GM12878 (cell line): ENCODE measurements at regions of chr22 and their contacts with region 1.

Region 1: DNA sequence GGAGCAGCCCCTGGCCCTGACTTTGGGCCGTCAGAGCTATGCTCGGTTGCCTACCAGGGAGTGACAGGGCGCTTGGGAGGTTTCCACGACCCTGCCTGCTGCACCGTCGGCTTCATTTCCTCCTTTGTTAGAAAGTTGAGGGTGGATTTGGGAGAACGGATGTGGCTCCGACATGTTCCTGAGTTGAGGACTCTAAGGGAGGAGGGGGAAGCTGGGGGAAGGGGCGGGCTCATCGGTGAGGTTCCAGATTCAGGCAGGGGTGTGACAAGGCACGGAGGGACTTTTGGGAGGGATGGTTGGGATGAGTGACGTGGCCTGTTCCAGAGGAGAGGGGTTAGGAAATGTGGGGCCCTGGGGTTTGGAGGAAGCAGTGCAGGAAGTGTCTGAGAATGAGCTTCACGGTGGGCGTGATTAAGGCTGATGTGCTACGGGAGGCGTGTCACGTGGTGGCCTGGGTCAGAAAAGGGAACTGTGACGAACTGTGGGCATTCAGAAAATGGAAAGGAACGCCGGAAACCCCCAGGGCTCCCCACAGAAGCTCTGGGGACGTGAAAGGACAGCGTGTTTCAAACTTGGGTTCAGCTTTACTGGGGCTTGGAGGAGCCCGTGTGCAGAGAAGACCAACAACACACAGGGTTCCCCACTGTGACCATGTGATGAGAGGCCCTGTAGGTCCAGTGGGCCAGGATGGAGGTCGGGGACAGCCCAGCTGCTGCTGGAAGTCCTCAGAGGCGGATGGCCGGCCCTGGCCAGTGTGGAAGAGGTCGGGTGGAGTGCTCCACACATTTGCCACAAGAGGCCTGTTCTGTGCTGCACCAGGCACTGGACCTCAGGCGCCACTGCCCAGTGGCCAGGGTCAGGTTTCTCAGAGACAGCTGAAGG is 2.8 kb downstream of the PARVB start:
- DNase-seq: peak; percentile 89
- ATAC-seq: peak; percentile 65
- H3K4me3 ChIP-seq: peak overlapping the region; percentile 78
- H3K27ac ChIP-seq: peak overlapping the region; percentile 100
- H3K4me1 ChIP-seq: peaks cover 25% of the 10 kb centered on the region
- H3K27me3 ChIP-seq: no peaks in the 10 kb centered on the region
- CTCF ChIP-seq: no peak
- EP300 ChIP-seq: peak; percentile 90 to 93
- POLR2A ChIP-seq: peak; percentile 82
- RAD21 ChIP-seq: no peak

Region 2: DNA sequence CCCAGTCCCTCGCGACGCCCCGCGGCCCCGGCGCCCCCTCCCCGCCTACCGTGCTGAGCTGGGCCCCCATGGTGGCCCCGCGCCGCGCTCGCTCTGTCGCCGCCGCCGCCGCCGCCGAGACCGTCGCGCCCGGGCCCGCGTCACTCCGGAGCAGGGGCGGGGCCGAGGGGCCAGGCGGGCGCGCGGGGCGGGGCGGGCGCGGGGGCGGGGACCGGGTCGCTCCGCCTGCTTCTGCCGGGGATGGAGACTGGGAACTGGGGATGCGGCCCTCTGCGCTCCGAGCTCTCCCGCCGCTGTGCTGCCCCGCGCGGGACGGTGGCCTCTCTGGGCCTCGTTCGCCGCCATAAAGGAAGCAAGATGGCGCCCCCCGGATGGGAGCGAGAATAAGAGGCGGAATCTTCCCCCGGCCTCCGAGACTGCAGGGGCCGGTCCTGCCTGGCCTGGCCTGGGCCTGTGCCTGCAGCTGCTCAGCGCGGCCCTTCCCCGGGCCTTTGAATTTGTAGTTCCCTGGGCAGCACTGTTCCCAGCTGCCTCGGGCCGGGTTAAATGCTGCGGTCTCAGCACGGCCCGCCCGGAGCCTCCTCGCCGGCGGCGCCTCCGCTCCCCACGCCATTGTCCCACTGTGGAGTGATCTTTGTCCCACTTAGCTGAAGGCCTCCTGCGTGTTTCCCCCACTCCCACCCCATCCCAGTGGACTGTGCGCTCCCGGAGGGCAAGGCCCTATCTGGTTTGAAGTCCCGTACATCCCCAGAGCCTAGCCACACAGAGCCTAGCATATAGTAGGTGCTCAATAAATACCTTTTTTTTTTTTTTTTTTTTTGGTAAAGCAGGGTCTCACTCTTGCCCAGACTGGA is 1377.4 kb before region 1 on chr22 and contains the start of gene CYB5R3:
- CTCF ChIA-PET with region 1: no interaction called
- POLR2A ChIA-PET with region 1: no interaction called
- RAD21 ChIA-PET with region 1: no interaction called
- SMC1A ChIA-PET with region 1: no interaction called
- in situ Hi-C with region 1: loop called (anchors 25 kb)
- intact Hi-C with region 1: no loop called
- DNase-seq: no peak
- ATAC-seq: peak; percentile 79
- H3K4me3 ChIP-seq: peak within 1 kb of the TSS; percentile 100
- H3K27ac ChIP-seq: peak within 1 kb of the TSS; percentile 85
- H3K4me1 ChIP-seq: peaks cover 25% of the 10 kb centered on the region
- H3K27me3 ChIP-seq: no peaks in the 10 kb centered on the region
- CTCF ChIP-seq: no peak
- EP300 ChIP-seq: no peak
- POLR2A ChIP-seq: peak; percentile 82
- RAD21 ChIP-seq: no peak
- polyA plus RNA-seq, gene CYB5R3: 2.0 to 3.5 TPM

Region 3: DNA sequence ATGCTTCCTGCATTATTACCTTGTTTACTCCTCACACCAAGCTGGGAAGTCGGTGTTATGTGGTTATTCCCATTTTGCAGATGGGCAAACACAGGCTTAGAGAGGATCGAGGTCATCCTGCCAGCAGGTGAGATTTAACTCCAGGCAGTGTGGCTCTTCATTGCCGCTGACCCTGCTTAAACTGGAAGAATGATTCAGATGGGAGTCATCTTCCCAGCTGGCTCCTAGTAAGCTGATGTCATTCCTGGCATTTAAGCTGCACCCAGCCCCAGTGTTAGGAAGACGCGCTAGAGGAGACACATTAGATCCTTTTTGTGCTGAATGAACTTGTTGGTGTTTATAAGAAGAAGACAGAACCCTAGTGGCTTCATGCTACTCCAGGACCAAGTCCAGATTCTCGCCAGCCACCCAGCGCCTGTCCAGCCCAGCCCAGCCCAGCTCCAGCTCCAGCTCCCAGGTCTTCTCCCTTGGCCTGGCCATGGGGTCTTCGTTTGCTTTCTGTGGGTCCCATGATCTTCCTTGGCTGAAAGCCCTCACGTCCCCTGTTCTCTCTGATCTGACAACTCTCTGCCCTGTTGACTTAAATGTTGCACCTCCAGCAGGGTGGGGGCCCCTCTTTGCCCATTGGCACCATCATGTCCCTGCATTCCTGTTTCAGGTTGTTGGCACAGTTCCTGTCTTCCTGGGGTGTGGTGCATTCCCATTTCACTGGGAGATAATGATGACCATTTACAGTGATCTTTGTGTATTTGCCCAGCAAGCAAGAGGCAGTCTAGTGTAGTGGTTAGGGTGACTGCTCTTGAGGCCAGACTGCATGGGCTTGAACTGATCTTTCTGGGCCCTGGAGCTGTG is 10.9 kb after region 1 on chr22:
- CTCF ChIA-PET with region 1: interaction called, 7 read pairs
- POLR2A ChIA-PET with region 1: interaction called, 17 read pairs
- RAD21 ChIA-PET with region 1: interaction called, 42 read pairs
- SMC1A ChIA-PET with region 1: interaction called, 30 read pairs
- in situ Hi-C with region 1: no loop called
- intact Hi-C with region 1: loop called (anchors 1 kb)
- DNase-seq: no peak
- ATAC-seq: no peak
- H3K4me3 ChIP-seq: no peak overlapping the region
- H3K27ac ChIP-seq: no peak overlapping the region
- H3K4me1 ChIP-seq: peaks cover 18% of the 10 kb centered on the region
- H3K27me3 ChIP-seq: no peaks in the 10 kb centered on the region
- CTCF ChIP-seq: no peak
- EP300 ChIP-seq: no peak
- POLR2A ChIP-seq: no peak
- RAD21 ChIP-seq: no peak

Region 4: DNA sequence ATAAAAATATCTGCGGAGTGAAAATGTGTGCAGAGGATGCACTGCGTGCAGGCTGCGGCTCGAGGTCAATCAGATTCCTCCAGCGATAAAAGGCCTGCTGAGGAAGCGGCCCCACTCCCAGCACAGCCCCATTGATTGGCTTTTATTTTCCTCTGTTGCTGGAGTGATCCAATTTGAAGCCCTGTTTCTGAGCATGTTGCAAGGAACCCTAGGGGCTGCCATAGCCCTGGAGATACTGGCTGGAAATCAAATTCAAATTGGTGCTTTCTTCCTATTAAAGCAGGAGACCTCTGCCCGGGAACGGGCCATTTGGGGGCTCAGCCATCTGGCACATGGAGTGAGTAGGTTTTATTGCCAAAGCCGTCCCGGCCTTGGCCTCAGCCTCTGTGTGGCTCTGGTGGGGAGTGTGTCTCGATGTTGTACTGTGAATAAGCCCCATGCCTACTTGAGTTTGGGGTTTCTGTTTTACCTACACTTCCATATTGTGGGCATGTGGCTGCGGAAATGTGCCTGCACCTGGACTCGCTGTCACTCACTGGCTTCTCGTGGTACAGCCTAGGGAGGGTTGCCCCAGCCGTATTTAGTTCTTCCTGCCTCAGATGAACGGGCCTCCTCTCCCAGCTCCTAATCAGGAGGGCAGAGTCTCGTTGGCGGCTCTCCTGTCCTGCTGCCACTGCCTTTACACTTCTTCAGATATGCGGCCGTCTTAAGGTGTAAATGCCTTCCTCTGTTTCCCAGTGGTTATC is 22.8 kb after region 1 on chr22:
- CTCF ChIA-PET with region 1: no interaction called
- POLR2A ChIA-PET with region 1: interaction called, 33 read pairs
- RAD21 ChIA-PET with region 1: interaction called, 11 read pairs
- SMC1A ChIA-PET with region 1: interaction called, 5 read pairs
- in situ Hi-C with region 1: no loop called
- intact Hi-C with region 1: no loop called
- DNase-seq: no peak
- ATAC-seq: no peak; the same call in 2 of the 3 replicates
- H3K4me3 ChIP-seq: no peak overlapping the region
- H3K27ac ChIP-seq: peak overlapping the region; percentile 27
- H3K4me1 ChIP-seq: peaks cover 35% of the 10 kb centered on the region
- H3K27me3 ChIP-seq: no peaks in the 10 kb centered on the region
- CTCF ChIP-seq: no peak
- EP300 ChIP-seq: no peak
- POLR2A ChIP-seq: no peak
- RAD21 ChIP-seq: no peak

Region 5: DNA sequence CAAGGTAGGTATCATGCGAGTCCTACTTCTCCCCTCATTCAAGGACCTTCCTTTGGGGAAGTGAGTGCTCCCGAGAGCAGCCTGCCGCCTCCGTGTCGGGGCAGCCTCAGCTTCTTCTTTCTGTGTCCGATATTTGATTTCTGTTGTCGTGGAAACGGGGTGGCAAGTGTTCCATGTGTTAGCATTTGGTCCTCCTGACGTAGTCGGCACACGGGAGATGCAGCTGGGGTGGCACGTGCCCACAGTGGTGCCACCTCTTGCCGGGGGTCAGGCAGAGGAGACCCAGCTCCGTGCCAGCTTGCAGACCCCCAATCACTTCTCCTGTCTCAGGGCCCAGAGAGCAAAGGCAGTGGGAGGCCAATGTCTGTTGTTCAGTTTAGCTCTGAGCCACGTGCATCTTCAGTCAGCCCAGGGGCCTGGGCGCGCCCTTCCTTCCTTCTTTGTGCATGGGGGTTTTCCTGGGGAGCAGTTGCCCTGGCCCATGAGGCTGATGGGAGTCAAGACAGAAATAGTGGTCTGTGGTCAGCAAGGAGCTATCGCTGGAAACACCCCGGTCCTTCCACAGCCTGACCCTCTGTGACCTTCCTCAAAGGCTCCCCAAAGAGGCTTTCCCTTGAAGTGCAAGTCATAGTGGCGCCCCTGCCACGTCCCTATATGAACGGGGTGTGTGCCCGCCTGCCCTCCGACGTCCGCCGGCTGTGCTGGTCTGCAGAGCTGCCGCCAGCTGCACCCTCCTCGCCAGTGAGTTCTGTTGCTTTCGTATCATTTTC is 41.7 kb after region 1 on chr22:
- CTCF ChIA-PET with region 1: interaction called, 3 read pairs
- POLR2A ChIA-PET with region 1: interaction called, 25 read pairs
- RAD21 ChIA-PET with region 1: interaction called, 17 read pairs
- SMC1A ChIA-PET with region 1: interaction called, 16 read pairs
- in situ Hi-C with region 1: no loop called
- intact Hi-C with region 1: loop called (anchors 1 kb)
- DNase-seq: peak; percentile 56
- ATAC-seq: peak; percentile 84
- H3K4me3 ChIP-seq: peak overlapping the region; percentile 18; the same call in 1 of the 2 replicates
- H3K27ac ChIP-seq: peak overlapping the region; percentile 78
- H3K4me1 ChIP-seq: peaks cover 39% of the 10 kb centered on the region
- H3K27me3 ChIP-seq: no peaks in the 10 kb centered on the region
- CTCF ChIP-seq: peak; percentile 4 to 21 (median 6); a peak in 2 of 6 replicates
- EP300 ChIP-seq: 0 out of 4 replicates have a peak, but pooled peaks of 1 of the 2 experiments have one; percentile 5
- POLR2A ChIP-seq: no peak
- RAD21 ChIP-seq: no peak

Region 6: GRCh38 chr22:44172370-44173108 is 145.7 kb after region 1 on chr22:
- CTCF ChIA-PET with region 1: no interaction called
- POLR2A ChIA-PET with region 1: no interaction called
- RAD21 ChIA-PET with region 1: no interaction called
- SMC1A ChIA-PET with region 1: no interaction called
- in situ Hi-C with region 1: no loop called
- intact Hi-C with region 1: no loop called
- DNase-seq: no peak
- ATAC-seq: peak; percentile 99
- H3K4me3 ChIP-seq: no peak overlapping the region; the same call in 1 of the 2 replicates
- H3K27ac ChIP-seq: peak overlapping the region; percentile 38
- H3K4me1 ChIP-seq: peaks cover 18% of the 10 kb centered on the region
- H3K27me3 ChIP-seq: no peaks in the 10 kb centered on the region
- CTCF ChIP-seq: no peak
- EP300 ChIP-seq: peak; percentile 33 to 80; a peak in 3 of 4 replicates
- POLR2A ChIP-seq: 0 out of 2 replicates have a peak, but pooled peaks have one; percentile 42
- RAD21 ChIP-seq: no peak